Ascending aorta (tissue), 2 donors: ENCODE measurements at regions of chr9 and their contacts with region 1.

Region 1: DNA sequence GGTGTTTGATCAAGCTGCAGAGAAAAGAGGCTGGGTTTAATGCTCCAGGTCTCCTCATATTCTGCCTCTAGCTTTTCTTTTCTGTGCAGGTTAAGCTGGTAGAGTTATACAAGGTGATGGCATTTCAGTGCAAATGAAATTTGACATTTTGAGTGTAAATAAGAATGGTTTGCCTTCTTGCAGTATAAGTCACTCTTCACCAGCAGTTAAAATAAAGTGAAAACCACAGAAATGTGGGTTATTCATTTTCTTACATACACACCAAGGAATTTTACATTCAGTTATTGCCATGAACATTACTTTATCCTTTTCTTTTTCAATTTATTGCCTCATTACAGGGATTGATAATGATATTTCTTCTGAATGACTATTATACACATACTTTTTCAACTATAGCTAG is 337.5 kb upstream of the PCSK5 start:
- DNase-seq: no peak
- H3K4me3 ChIP-seq: no peak overlapping the region
- H3K27ac ChIP-seq: no peak overlapping the region
- H3K4me1 ChIP-seq: no peaks in the 10 kb centered on the region
- H3K27me3 ChIP-seq: no peaks in the 10 kb centered on the region
- CTCF ChIP-seq: no peak

Region 2: GRCh38 chr9:75471549-75472114 is 81.3 kb before region 1 on chr9:
- intact Hi-C with region 1: loop called (anchors 10 kb)
- DNase-seq: no peak
- H3K4me3 ChIP-seq: no peak overlapping the region
- H3K27ac ChIP-seq: no peak overlapping the region
- H3K4me1 ChIP-seq: no peaks in the 10 kb centered on the region
- H3K27me3 ChIP-seq: no peaks in the 10 kb centered on the region
- CTCF ChIP-seq: no peak